ENCODE measurements at regions of chr11 and their contacts with region 1.

Region 1: DNA sequence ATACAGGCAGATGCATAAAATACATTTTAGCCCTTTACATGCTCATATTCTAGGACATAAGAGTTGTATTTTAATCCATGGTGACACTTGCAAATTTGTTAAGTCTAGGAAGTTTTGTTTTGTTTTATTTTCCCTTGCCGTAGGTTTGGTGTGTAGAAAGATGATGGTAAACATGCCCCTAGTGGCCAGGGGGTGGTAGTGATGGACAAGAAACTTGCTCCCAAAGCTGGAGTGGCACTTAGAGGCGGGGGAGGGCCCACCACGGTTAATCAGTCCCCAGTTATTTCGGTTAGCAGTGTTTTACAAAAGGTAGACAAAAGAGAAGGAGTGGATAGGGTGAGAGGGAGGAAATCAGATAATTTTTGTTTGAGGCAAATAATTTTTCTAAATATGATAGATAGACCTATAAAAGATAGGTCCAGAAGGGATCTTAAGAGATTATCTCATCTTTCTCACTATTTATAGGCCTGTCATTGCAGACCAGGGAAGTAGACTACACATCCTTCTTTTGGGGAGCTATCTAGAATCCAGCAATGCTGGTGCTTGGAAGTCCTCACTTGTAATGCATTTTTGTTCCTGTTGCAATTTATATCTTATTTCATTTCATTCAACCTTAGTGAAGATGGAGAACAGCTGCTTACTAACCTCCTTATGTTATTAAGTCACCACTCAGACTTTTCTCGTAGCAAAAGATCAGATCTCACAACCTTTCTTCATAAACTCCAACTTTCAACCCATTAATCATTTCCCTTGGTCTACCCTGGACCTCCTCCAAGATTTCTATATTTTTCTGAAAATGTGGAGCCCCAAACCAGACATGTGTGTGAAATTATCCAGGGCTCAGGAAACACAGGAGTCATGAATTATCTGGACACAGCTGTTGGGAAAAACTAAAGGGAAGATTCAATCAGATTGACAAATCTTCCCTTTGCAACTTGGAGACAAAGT is 5.9 kb upstream of the BDNF start:
- DNase-seq: no peak
- ATAC-seq: peak; percentile 64
- H3K4me3 ChIP-seq: no peak overlapping the region
- H3K27ac ChIP-seq: no peak overlapping the region
- H3K4me1 ChIP-seq: peaks cover 0 to 7% of the 10 kb centered on the region in 2 donors
- H3K27me3 ChIP-seq: peaks cover 19 to 62% of the 10 kb centered on the region in 2 donors
- CTCF ChIP-seq: peak; percentile 41 to 52

Region 2: GRCh38 chr11:27213232-27213660 is 492.9 kb before region 1 on chr11:
- intact Hi-C with region 1: no loop called
- DNase-seq: peak in 2 of 4 donors; percentile 33 to 59
- ATAC-seq: peak; percentile 39
- H3K4me3 ChIP-seq: no peak overlapping the region
- H3K27ac ChIP-seq: peak overlapping the region in 1 of 2 donors; percentile 38
- H3K4me1 ChIP-seq: peaks cover 19 to 25% of the 10 kb centered on the region in 2 donors
- H3K27me3 ChIP-seq: no peaks in the 10 kb centered on the region
- CTCF ChIP-seq: no peak

Region 3: GRCh38 chr11:28529540-28530410 is 823.6 kb after region 1 on chr11:
- intact Hi-C with region 1: loop called in 1 of 2 experiments (anchors 10 kb)
- DNase-seq: peak in 2 of 4 donors; percentile 22 to 44
- ATAC-seq: peak; percentile 50
- H3K4me3 ChIP-seq: no peak overlapping the region
- H3K27ac ChIP-seq: no peak overlapping the region
- H3K4me1 ChIP-seq: no peaks in the 10 kb centered on the region
- H3K27me3 ChIP-seq: no peaks in the 10 kb centered on the region
- CTCF ChIP-seq: peak in 1 of 2 donors; percentile 37